ENCODE measurements at regions of chr19 and their contacts with region 1.

Region 1: DNA sequence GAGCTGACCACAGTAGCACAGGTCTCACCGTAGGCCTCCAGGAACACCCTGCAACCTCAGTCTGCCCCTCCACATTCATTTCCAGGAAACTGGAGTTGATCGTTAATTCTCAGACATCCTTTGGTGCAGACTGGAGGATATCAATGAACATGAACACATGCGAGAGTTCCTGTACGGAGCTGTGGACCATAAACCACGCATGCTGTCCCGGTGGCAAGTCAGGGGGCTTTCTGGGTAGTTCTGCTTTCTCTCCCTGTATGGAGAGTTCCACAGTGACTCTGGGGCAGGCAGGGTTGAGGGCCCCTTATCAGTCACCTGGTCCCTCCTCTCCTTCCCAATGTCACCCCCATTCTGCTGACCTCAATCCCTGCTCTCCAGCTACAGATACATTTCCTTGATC is 55.5 kb upstream of the URI1 start:
- DNase-seq: no peak
- ATAC-seq: no peak
- H3K4me3 ChIP-seq: no peak overlapping the region
- H3K4me3 Mint-ChIP-seq: no peak overlapping the region
- H3K27ac ChIP-seq: no peak overlapping the region
- H3K27ac Mint-ChIP-seq: no peak overlapping the region
- H3K4me1 ChIP-seq: peaks cover 0 to 3% of the 10 kb centered on the region in 2 experiments
- H3K4me1 Mint-ChIP-seq: peaks cover 5 to 13% (median 6%) of the 10 kb centered on the region in 3 donors
- H3K27me3 ChIP-seq: peaks cover 0 to 31% of the 10 kb centered on the region in 2 experiments
- H3K27me3 Mint-ChIP-seq: no peaks in the 10 kb centered on the region

Region 2: DNA sequence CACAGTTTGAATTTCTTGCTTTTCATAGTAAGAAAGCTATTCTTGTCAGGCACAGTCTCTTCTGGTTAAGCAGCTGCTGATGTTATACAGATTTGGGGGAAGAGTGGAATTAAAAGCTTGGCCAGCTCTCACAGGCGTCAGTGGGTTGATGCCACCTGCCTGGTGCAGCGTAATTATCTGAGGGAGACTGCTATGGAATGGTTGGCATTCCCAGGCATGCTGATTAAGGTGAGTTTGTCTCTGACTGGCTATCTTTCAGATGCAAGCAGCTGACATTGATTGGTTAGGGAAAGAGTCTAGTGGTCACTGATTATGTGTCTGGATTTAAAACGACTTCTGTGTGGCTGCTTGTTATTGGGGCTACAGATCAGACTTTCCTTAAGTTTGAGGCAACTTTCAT is 1622.0 kb before region 1 on chr19:
- CTCF ChIA-PET with region 1: interaction called in 1 of 2 experiments, 10 read pairs
- POLR2A ChIA-PET with region 1: no interaction called
- DNase-seq: no peak
- ATAC-seq: no peak
- H3K4me3 ChIP-seq: no peak overlapping the region
- H3K4me3 Mint-ChIP-seq: no peak overlapping the region
- H3K27ac ChIP-seq: no peak overlapping the region
- H3K27ac Mint-ChIP-seq: no peak overlapping the region
- H3K4me1 ChIP-seq: no peaks in the 10 kb centered on the region
- H3K4me1 Mint-ChIP-seq: no peaks in the 10 kb centered on the region
- H3K27me3 ChIP-seq: no peaks in the 10 kb centered on the region
- H3K27me3 Mint-ChIP-seq: peaks cover 0 to 6% of the 10 kb centered on the region in 2 donors

Region 3: DNA sequence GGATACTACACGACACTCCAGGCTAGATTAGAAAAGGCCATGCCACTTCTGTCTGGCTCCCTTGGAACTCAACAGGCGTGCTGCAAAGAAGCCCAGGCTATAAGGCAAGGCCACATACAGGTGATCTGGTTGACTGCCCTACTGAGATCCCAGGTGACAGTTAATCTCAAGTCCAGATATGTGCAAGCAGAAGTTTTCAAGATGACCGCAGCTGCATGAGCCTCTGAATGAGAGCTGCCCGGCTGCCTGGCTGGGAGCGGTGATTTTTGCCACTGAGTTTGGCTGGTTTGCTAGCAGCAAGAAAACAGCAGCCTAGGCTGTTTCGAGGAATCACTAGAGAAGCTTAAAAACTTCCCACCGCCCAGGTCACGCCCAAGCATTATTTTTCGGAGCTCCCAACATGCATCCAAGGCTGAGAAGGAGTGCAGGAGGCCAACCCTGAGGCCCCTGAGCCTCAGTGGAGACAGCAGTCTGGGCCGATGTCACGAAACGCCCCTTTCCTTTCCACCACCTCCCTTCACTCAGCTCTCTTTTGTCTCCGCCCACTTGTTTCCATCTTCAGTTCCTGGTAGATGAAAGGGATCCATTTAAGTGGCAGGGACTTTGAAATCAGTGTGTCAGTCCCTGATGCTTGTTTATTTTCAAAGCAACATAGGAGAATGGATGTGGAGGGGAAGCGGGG is 41.5 kb after region 1 on chr19:
- CTCF ChIA-PET with region 1: no interaction called
- POLR2A ChIA-PET with region 1: no interaction called
- DNase-seq: no peak
- ATAC-seq: no peak
- H3K4me3 ChIP-seq: no peak overlapping the region
- H3K4me3 Mint-ChIP-seq: no peak overlapping the region
- H3K27ac ChIP-seq: no peak overlapping the region
- H3K27ac Mint-ChIP-seq: no peak overlapping the region
- H3K4me1 ChIP-seq: no peaks in the 10 kb centered on the region
- H3K4me1 Mint-ChIP-seq: no peaks in the 10 kb centered on the region
- H3K27me3 ChIP-seq: peaks cover 0 to 13% of the 10 kb centered on the region in 2 experiments
- H3K27me3 Mint-ChIP-seq: peaks cover 0 to 3% of the 10 kb centered on the region in 2 donors

Measured in T-cell (primary cell).